ENCODE measurements at regions of chr19 and their contacts with region 1.

Region 1: DNA sequence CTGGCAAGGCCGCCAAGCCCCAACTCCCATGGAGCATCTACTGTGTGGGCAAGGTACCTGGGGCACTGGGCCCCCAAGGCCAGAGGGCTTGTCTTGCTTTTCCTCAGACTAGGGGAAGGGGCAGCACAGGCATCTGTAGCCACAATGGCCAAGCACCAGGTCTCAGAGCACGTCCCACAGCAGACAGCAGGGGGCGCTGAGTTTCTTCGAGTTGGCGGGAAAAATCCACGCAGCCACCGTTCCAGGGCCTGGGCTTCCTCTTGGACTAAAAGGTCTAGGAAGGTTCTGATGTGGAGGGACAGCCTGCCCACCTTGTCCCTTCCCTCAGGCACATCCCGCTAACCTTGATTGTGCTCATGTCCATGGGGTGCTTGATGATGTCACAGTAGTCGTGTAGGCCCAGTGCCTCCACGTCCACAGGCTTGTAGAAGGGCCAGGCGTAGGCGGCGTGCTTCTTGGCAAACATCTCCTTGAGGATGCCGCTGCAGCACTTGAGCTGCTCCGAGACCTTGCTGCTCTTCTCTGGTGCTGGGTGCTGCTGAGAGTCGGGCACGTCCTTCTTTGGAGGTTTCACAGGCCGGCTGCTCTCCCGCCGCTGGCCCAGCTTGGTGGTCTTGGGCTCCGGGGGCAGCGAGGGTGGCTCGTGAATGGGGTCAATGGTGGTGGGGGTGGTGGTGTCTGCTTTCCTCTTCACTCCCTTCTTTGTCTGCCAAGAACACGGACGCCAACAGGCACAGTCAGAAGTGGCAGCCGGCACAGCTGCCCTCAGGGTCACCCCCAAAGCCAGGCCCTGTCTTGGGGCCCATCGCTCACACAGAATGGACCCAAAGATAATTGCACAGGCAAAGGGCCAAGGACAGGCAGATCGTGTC is 32.0 kb upstream of the EPHX3 start:
- DNase-seq: peak; percentile 58 to 82 (median 66)
- ATAC-seq: peak; percentile 80
- H3K4me3 ChIP-seq: no peak overlapping the region
- H3K4me3 Mint-ChIP-seq: no peak overlapping the region
- H3K27ac ChIP-seq: no peak overlapping the region
- H3K27ac Mint-ChIP-seq: no peak overlapping the region
- H3K4me1 ChIP-seq: no peaks in the 10 kb centered on the region
- H3K4me1 Mint-ChIP-seq: peaks cover 13% of the 10 kb centered on the region
- H3K27me3 ChIP-seq: no peaks in the 10 kb centered on the region
- H3K27me3 Mint-ChIP-seq: no peaks in the 10 kb centered on the region
- CTCF ChIP-seq: peak; percentile 75

Region 2: GRCh38 chr19:14985133-14985532 is 279.2 kb before region 1 on chr19:
- CTCF ChIA-PET with region 1: no interaction called
- POLR2A ChIA-PET with region 1: no interaction called
- intact Hi-C with region 1: no loop called
- DNase-seq: no peak
- ATAC-seq: no peak
- H3K4me3 ChIP-seq: no peak overlapping the region
- H3K4me3 Mint-ChIP-seq: no peak overlapping the region
- H3K27ac ChIP-seq: no peak overlapping the region
- H3K27ac Mint-ChIP-seq: no peak overlapping the region
- H3K4me1 ChIP-seq: no peaks in the 10 kb centered on the region
- H3K4me1 Mint-ChIP-seq: no peaks in the 10 kb centered on the region
- H3K27me3 ChIP-seq: peaks cover 20 to 22% of the 10 kb centered on the region in 2 experiments
- H3K27me3 Mint-ChIP-seq: peaks cover 41% of the 10 kb centered on the region
- CTCF ChIP-seq: no peak

Region 3: GRCh38 chr19:15177269-15178116 is 86.8 kb before region 1 on chr19:
- CTCF ChIA-PET with region 1: no interaction called
- POLR2A ChIA-PET with region 1: no interaction called
- intact Hi-C with region 1: loop called in 1 of 2 experiments (anchors 5 kb)
- DNase-seq: peak; percentile 66 to 92 (median 80)
- ATAC-seq: peak; percentile 100
- H3K4me3 ChIP-seq: no peak overlapping the region
- H3K4me3 Mint-ChIP-seq: no peak overlapping the region
- H3K27ac ChIP-seq: no peak overlapping the region
- H3K27ac Mint-ChIP-seq: no peak overlapping the region
- H3K4me1 ChIP-seq: peaks cover 7% of the 10 kb centered on the region
- H3K4me1 Mint-ChIP-seq: peaks cover 5% of the 10 kb centered on the region
- H3K27me3 ChIP-seq: peaks cover 0 to 6% of the 10 kb centered on the region in 2 experiments
- H3K27me3 Mint-ChIP-seq: peaks cover 21% of the 10 kb centered on the region
- CTCF ChIP-seq: peak; percentile 79

Measured in CD4-positive, alpha-beta T cell (primary cell).